ENCODE measurements at regions of chr2 and their contacts with region 1.

Region 1: GRCh38 chr2:218186355-218186766 is 19.6 kb upstream of the CXCR1 start:
- DNase-seq: peak; percentile 76
- ATAC-seq: peak; percentile 94
- H3K4me3 ChIP-seq: peak overlapping the region in 1 of 3 experiments; percentile 14; a peak in 1 of 6 replicates
- H3K27ac ChIP-seq: no peak overlapping the region
- H3K4me1 ChIP-seq: peaks cover 15% of the 10 kb centered on the region
- H3K27me3 ChIP-seq: peaks cover 0 to 11% of the 10 kb centered on the region in 2 experiments; a peak in 1 of 5 replicates
- CTCF ChIP-seq: peak; percentile 87
- EP300 ChIP-seq: no peak
- POLR2A ChIP-seq: no peak
- RAD21 ChIP-seq: peak; percentile 64

Region 2: DNA sequence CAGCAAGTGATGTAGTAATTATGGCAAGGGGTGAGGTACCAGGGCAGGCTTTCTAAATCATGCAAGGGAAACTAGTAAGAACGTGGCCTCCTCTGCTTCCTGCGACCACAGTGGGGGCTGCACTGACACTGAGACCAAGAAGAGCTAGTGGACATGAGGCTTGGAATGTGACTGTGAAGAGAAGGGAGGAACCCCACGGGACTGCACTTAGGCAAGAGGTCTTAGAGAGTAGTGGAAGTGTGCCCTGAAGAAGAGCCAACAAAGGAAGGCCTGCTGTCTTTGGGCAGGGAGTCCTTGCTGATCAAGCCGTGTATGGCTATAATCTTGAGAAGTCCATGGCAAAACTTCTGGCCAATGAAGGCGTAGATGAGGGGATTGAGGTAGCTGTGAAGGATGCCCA is 126.2 kb before region 1 on chr2:
- CTCF ChIA-PET with region 1: no interaction called
- POLR2A ChIA-PET with region 1: no interaction called
- in situ Hi-C with region 1: no loop called
- intact Hi-C with region 1: no loop called
- DNase-seq: no peak
- ATAC-seq: no peak
- H3K4me3 ChIP-seq: no peak overlapping the region
- H3K27ac ChIP-seq: no peak overlapping the region
- H3K4me1 ChIP-seq: no peaks in the 10 kb centered on the region
- H3K27me3 ChIP-seq: peaks cover 8 to 61% of the 10 kb centered on the region in 2 experiments; a peak in 3 of 5 replicates
- CTCF ChIP-seq: no peak
- EP300 ChIP-seq: no peak
- POLR2A ChIP-seq: no peak
- RAD21 ChIP-seq: no peak

Region 3: DNA sequence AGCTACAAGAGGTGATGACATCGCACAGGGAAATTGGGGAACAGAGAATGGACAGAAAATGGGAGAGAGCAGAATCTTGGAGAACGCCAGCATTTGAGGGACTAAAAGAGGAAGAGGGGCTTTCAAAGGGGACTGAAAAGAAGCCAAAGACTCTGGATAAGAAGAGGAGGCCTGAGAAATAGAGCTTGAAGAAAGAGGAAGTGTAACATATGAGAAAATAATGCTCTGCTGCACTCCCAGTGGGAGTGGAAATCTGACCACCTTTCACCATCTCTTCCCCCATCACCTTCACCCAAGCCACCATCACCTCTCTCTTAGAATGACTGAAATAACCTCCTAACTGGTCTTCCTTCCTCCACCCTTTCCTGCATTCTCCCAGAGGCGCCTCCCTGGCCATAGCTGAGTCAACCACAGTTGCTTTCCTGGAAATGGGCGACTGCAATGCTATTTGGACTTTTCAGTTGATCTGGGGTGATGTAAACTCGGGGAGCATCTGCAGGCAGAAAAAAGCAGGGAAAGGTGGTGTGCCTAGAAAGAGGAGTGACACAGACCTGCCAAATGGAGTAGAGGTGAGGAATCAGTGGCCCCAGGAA is 36.4 kb before region 1 on chr2:
- CTCF ChIA-PET with region 1: no interaction called
- POLR2A ChIA-PET with region 1: no interaction called
- in situ Hi-C with region 1: no loop called
- intact Hi-C with region 1: no loop called
- DNase-seq: no peak
- ATAC-seq: no peak
- H3K4me3 ChIP-seq: no peak overlapping the region
- H3K27ac ChIP-seq: no peak overlapping the region
- H3K4me1 ChIP-seq: peaks cover 9% of the 10 kb centered on the region
- H3K27me3 ChIP-seq: peaks cover 2 to 41% of the 10 kb centered on the region in 2 experiments; a peak in 4 of 5 replicates
- CTCF ChIP-seq: no peak
- EP300 ChIP-seq: no peak
- POLR2A ChIP-seq: no peak
- RAD21 ChIP-seq: no peak

Region 4: DNA sequence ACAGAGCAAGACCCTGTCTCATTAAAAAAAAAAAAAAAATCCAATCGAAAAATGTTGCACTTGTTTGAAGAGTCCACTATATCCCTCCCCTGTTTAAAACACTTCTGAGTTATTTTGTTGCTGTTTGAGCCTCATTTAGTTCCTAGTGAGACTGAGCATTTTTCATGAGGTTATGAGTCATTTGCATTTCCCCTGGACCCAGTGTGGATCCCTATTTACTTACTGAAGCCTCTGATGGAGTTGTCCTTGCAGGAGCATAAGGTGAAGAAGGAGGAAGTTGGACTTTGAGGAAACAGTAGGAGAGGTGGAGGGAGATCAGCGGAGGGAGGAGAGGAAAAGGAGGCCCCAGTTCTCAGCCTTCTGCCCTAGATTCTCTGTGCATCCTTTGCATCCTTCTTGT is 24.7 kb before region 1 on chr2:
- CTCF ChIA-PET with region 1: no interaction called
- POLR2A ChIA-PET with region 1: no interaction called
- in situ Hi-C with region 1: no loop called
- intact Hi-C with region 1: loop called (anchors 1 kb)
- DNase-seq: no peak
- ATAC-seq: no peak
- H3K4me3 ChIP-seq: no peak overlapping the region
- H3K27ac ChIP-seq: no peak overlapping the region
- H3K4me1 ChIP-seq: no peaks in the 10 kb centered on the region
- H3K27me3 ChIP-seq: peaks cover 6 to 68% of the 10 kb centered on the region in 2 experiments
- CTCF ChIP-seq: no peak
- EP300 ChIP-seq: no peak
- POLR2A ChIP-seq: no peak
- RAD21 ChIP-seq: no peak

Region 5: GRCh38 chr2:218257390-218257981 is 71.1 kb after region 1 on chr2:
- CTCF ChIA-PET with region 1: interaction called, 9 read pairs
- POLR2A ChIA-PET with region 1: no interaction called
- in situ Hi-C with region 1: no loop called
- intact Hi-C with region 1: loop called (anchors 5 kb)
- DNase-seq: no peak
- ATAC-seq: peak; percentile 14; the same call in 2 of the 3 replicates
- H3K4me3 ChIP-seq: no peak overlapping the region
- H3K27ac ChIP-seq: no peak overlapping the region
- H3K4me1 ChIP-seq: peaks cover 29% of the 10 kb centered on the region
- H3K27me3 ChIP-seq: no peaks in the 10 kb centered on the region
- CTCF ChIP-seq: peak; percentile 57
- EP300 ChIP-seq: no peak
- POLR2A ChIP-seq: no peak
- RAD21 ChIP-seq: 0 out of 2 replicates have a peak, but pooled peaks have one; percentile 13

Region 6: GRCh38 chr2:219254591-219255201 is 1068.3 kb after region 1 on chr2:
- CTCF ChIA-PET with region 1: no interaction called
- POLR2A ChIA-PET with region 1: no interaction called
- in situ Hi-C with region 1: no loop called
- intact Hi-C with region 1: no loop called
- DNase-seq: no peak
- ATAC-seq: no peak; the same call in 2 of the 3 replicates
- H3K4me3 ChIP-seq: peak overlapping the region; percentile 62 to 83 (median 62)
- H3K27ac ChIP-seq: no peak overlapping the region
- H3K4me1 ChIP-seq: peaks cover 53% of the 10 kb centered on the region
- H3K27me3 ChIP-seq: peaks cover 2 to 40% of the 10 kb centered on the region in 2 experiments; a peak in 4 of 5 replicates
- CTCF ChIP-seq: peak; percentile 3; the same call in 1 of the 2 replicates
- EP300 ChIP-seq: no peak
- POLR2A ChIP-seq: no peak
- RAD21 ChIP-seq: no peak

Measured in HepG2 (cell line).